Motor neuron (in vitro differentiated cells): ENCODE measurements at regions of chr19 and their contacts with region 1.

Region 1: GRCh38 chr19:34539396-34539795 is 57.8 kb downstream of the WTIP start:
- ATAC-seq: no peak
- H3K4me3 ChIP-seq: no peak overlapping the region
- H3K27ac ChIP-seq: no peak overlapping the region
- H3K4me1 ChIP-seq: no peaks in the 10 kb centered on the region

Region 2: DNA sequence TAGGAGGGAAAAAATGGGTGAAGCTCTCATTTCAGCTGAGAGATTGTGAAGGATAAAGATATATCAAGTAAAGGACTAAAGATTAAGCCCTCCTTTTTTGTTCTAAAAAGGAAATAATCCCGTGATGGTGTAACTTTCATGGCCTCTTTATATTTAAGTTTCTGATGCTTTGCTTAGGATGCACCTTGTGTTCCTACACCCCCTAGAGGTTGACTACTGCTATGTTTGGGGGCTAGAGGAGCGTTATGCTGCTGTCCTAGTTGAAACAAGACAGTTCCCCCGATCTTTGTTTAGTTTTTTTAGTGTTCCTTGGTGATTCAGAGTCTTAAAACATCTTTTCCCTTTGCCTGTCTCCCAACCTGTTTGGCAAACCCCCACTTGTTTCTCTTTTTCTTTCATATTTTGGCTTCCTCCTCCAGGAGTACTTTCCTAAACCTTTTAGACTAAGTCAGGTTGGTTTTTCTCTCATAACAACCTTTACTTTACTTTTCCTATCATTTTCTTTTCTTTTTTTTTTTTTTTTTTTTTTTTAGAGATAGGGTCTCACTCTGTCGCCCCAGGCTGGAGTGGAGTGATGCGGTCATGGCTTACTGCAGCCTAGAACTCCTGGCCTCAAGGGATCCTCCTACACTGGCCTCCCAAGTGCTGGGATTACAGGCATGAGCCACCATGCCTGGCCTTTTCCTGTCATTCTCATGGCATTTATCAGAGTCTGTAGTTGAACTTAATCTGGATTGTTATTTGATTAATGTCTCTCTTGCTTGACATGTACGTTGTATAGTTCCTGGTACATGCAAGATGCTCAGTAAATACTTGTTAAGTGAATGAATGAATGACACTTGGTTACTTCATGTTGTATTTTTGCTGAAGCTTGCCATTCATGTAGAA is 108.4 kb before region 1 on chr19:
- in situ Hi-C with region 1: no loop called
- ATAC-seq: peak in 3 of 8 experiments; percentile 4 to 30 (median 4)
- H3K4me3 ChIP-seq: peak overlapping the region in 1 of 5 donors; percentile 5
- H3K27ac ChIP-seq: no peak overlapping the region
- H3K4me1 ChIP-seq: peaks cover 4 to 21% of the 10 kb centered on the region in 2 donors

Region 3: DNA sequence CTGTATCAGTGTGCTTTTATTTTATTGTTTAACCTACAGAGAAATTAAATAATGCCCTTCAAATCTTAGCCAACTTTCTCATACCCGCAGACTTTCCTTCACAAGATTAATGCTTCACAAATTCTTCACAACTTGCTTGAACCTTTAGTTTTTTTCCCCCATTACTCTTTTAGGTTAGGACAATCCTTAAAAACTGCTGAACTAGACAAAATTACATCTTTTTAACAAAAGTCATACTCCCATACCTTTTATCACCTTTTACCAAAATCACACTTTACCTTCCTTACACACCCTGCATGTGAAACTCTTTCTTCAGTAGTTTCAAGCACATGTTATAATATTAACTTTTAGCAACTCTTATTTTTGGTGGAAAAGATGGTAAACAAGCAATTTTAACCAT is 79.0 kb after region 1 on chr19:
- in situ Hi-C with region 1: no loop called
- ATAC-seq: no peak
- H3K4me3 ChIP-seq: no peak overlapping the region
- H3K27ac ChIP-seq: no peak overlapping the region
- H3K4me1 ChIP-seq: no peaks in the 10 kb centered on the region

Region 4: DNA sequence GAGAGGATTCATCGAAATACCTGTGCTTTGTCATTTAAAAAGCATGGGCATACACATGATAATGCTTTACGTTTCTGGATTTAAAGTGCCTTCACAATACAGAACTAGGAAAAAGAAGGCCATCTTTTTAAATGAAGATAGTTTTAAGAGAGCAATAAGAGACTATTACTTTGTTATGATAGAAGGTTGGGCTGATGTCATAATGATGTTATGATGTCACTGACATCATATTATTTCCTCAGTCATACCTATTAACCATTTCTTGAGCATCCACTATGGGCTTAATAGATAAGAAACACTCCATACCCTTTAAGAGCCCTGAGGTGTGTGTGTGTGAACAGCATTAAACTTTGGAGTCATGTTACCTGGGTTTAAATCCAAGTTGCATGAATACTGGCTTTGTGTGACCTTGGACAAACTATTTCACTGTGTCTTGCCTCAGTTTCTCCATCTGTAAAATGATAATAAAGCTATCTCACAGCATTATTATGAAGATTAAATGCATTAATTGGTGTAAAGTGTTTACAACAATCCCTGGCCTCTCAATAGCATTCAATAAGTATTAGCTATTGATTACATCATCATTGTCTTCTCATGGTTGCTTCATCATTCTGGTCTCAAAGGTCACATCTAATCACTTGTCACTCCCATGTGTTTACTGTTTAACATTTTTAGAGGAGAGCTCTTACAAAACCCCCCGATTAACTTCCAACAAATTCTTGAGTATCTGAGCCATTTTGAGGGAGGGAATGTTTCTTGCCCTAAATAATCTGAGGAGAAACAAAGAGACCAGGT is 205.7 kb after region 1 on chr19:
- in situ Hi-C with region 1: loop called in 1 of 9 experiments (anchors 10 kb)
- ATAC-seq: no peak
- H3K4me3 ChIP-seq: no peak overlapping the region
- H3K27ac ChIP-seq: no peak overlapping the region
- H3K4me1 ChIP-seq: no peaks in the 10 kb centered on the region